ENCODE measurements at regions of chr4 and their contacts with region 1.

Region 1: DNA sequence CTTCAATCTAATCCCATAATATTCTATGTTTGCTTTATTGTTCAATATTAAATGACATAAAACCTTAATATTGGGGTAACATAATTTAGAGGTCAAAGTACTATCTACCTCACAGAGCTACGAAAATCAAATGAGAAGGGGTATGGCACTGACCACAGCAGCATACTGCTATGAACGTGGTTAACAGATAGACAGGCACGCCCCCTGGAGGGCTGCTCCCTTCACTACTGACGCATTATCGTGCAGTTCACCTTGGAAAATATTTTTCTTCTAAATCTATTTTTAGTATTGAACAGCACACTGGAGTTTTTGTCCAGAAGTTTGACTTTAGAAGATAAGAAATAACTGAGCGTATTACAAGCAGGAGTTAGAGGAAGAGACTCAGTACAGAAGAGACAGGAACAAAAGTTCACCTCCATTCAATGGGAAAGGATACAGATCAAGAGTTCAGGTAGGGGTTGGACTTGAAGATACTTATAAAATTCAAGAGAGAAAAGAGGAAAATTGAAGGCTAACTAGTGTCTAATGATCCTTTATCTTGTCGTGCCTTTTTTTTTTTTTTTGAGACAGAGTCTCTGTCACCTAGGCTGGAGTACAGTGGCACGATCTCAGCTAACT is 22.7 kb downstream of the MAP9 start:
- DNase-seq: peak; percentile 66
- H3K4me3 Mint-ChIP-seq: no peak overlapping the region
- H3K27ac Mint-ChIP-seq: peak overlapping the region; percentile 47
- H3K4me1 Mint-ChIP-seq: peaks cover 5% of the 10 kb centered on the region
- H3K27me3 Mint-ChIP-seq: no peaks in the 10 kb centered on the region
- CTCF ChIP-seq: peak; percentile 89

Region 2: GRCh38 chr4:154982187-154983047 is 371.6 kb before region 1 on chr4:
- CTCF ChIA-PET with region 1: interaction called, 124 read pairs
- POLR2A ChIA-PET with region 1: interaction called, 4 read pairs
- intact Hi-C with region 1: loop called (anchors 1 kb)
- DNase-seq: peak; percentile 82
- H3K4me3 Mint-ChIP-seq: no peak overlapping the region
- H3K27ac Mint-ChIP-seq: peak overlapping the region; percentile 20
- H3K4me1 Mint-ChIP-seq: peaks cover 6% of the 10 kb centered on the region
- H3K27me3 Mint-ChIP-seq: no peaks in the 10 kb centered on the region
- CTCF ChIP-seq: peak; percentile 69

Region 3: GRCh38 chr4:155304375-155304774 is 49.7 kb before region 1 on chr4:
- CTCF ChIA-PET with region 1: no interaction called
- POLR2A ChIA-PET with region 1: no interaction called
- intact Hi-C with region 1: no loop called
- DNase-seq: peak; percentile 43
- H3K4me3 Mint-ChIP-seq: no peak overlapping the region
- H3K27ac Mint-ChIP-seq: peak overlapping the region; percentile 88
- H3K4me1 Mint-ChIP-seq: peaks cover 26% of the 10 kb centered on the region
- H3K27me3 Mint-ChIP-seq: no peaks in the 10 kb centered on the region
- CTCF ChIP-seq: no peak

Region 4: DNA sequence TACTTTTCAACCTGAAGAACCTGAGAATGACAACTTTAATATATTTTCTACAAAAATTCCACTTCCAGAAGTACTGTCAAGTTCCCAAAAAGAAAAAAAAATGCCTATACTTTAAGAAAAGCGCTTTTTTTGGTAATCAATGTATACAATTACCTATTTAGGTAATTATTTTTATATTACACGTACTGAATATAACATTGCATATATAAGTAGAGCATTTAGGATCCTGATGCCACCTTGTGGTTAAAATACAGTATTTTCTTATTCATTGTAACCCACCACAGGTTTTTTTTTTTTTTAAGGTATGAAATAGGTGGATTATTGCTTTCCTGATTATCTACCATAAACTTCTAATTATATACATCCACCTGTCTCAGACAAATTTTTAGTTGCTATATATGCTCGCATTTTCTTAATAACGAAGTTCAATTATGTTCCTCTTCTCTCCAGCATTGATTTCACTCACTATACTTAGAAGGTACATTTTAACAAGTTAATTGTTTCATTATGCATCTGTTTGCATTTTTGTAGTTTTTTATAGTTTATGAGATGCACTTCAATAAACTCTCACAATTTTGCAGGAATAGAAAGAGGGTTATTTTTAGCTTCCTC is 17.5 kb after region 1 on chr4:
- CTCF ChIA-PET with region 1: interaction called, 13 read pairs
- POLR2A ChIA-PET with region 1: no interaction called
- intact Hi-C with region 1: no loop called
- DNase-seq: peak; percentile 40
- H3K4me3 Mint-ChIP-seq: no peak overlapping the region
- H3K27ac Mint-ChIP-seq: no peak overlapping the region
- H3K4me1 Mint-ChIP-seq: peaks cover 6% of the 10 kb centered on the region
- H3K27me3 Mint-ChIP-seq: no peaks in the 10 kb centered on the region
- CTCF ChIP-seq: peak; percentile 49